ENCODE measurements at regions of chrX and their contacts with region 1.

Region 1: GRCh38 chrX:115630204-115630603 is 69.2 kb downstream of the PLS3 start:
- DNase-seq: no peak
- ATAC-seq: peak; percentile 73 to 76
- H3K4me3 ChIP-seq: no peak overlapping the region
- H3K27ac ChIP-seq: no peak overlapping the region
- H3K4me1 ChIP-seq: peaks cover 3% of the 10 kb centered on the region
- H3K27me3 ChIP-seq: no peaks in the 10 kb centered on the region

Region 2: DNA sequence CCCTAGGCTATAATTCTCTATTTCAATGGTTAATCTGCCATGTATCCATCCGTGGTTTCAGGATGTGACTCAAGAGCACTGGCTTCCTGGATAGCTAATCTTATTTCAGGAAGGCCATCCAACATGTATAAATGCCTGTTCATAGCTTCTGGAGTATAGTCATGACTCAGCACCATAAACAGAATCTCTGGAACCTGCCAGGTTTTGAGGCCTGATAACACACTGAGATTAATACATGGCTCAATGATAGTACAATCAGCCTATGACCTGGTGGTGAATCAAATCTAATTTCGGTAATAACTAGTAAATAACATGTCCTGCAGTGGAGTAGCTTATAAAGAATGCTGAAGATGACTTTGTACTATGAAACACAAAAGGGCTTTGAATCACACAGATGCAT is 607.1 kb before region 1 on chrX:
- intact Hi-C with region 1: no loop called
- DNase-seq: no peak
- ATAC-seq: peak in 1 of 2 donors; percentile 80
- H3K4me3 ChIP-seq: no peak overlapping the region
- H3K27ac ChIP-seq: no peak overlapping the region
- H3K4me1 ChIP-seq: no peaks in the 10 kb centered on the region
- H3K27me3 ChIP-seq: no peaks in the 10 kb centered on the region

Region 3: DNA sequence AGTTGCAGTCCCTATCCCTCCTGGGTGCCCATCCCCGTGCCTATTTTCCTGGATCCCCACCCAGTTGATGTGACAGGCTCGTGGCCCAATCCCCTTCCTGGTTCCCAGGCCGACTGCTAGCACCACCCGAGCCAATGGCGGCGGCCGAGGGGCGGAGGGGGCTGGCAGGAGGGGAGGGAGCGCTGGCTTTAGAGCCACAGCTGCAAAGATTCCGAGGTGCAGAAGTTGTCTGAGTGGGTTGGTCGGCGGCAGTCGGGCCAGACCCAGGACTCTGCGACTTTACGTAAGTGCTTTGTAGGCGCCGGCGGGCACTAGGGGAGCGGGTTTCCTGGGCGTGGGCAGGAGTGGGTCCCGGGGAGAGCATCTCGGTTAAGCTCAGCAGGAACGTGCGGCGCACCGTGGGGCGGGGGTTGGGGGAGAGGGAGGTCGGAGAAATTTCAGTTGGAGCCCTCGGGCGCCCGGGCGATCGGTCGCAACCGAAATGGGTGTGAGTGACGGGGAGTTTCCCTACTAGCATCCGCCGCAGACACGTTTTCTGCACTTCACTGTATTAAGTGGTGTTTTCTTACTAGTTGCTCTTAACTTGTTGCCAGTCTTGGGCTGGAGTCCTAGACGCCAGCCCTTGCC is 69.1 kb before region 1 on chrX and contains the start of gene PLS3:
- intact Hi-C with region 1: loop called in 1 of 4 experiments (anchors 10 kb)
- DNase-seq: peak; percentile 89 to 94 (median 94)
- ATAC-seq: peak; percentile 94 to 95
- H3K4me3 ChIP-seq: peak within 1 kb of the TSS; percentile 89
- H3K27ac ChIP-seq: peak within 1 kb of the TSS; percentile 96
- H3K4me1 ChIP-seq: peaks cover 3% of the 10 kb centered on the region
- H3K27me3 ChIP-seq: no peaks in the 10 kb centered on the region
- total RNA-seq, gene PLS3: 32.5 to 43.1 (median 37.7) TPM